A673 (cell line): ENCODE measurements at regions of chr17 and their contacts with region 1.

Region 1: GRCh38 chr17:79997011-79997660 is 38.5 kb downstream of the TBC1D16 start:
- DNase-seq: peak; percentile 88
- H3K4me3 ChIP-seq: no peak overlapping the region
- H3K27ac ChIP-seq: peak overlapping the region; percentile 80
- H3K4me1 ChIP-seq: peaks cover 38% of the 10 kb centered on the region
- H3K27me3 ChIP-seq: no peaks in the 10 kb centered on the region
- CTCF ChIP-seq: no peak

Region 2: DNA sequence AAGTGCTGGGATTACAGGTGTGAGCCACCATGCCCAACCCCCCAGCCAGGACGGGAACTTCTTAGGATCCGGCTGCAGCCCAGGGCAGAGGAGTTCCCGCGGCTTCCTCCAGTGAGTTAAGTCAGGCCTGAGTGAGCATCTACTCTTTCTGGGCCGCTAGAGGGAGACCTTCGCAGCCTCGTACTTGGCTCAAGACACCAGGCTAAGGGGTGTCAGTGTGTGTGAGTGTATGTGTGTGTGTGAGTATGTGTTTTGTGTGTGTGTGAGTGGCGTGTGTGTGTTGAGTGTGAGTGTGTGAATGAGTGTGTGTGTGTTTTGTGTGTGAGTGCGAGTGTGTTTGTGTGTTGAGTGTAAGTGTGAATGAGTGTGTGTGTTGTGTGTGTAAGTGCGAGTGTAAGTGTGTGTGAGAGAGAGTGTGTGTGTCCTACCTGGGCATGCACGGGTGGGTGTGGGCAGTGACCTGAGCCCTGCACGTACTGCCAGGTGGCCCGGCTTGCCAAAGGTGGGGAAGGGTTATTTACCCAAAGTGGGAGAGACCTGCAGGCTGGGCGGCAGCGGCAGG is 1707.3 kb before region 1 on chr17:
- CTCF ChIA-PET with region 1: interaction called, 12 read pairs
- POLR2A ChIA-PET with region 1: no interaction called
- intact Hi-C with region 1: no loop called
- DNase-seq: peak; percentile 90
- H3K4me3 ChIP-seq: no peak overlapping the region
- H3K27ac ChIP-seq: no peak overlapping the region
- H3K4me1 ChIP-seq: no peaks in the 10 kb centered on the region
- H3K27me3 ChIP-seq: no peaks in the 10 kb centered on the region
- CTCF ChIP-seq: peak; percentile 89

Region 3: DNA sequence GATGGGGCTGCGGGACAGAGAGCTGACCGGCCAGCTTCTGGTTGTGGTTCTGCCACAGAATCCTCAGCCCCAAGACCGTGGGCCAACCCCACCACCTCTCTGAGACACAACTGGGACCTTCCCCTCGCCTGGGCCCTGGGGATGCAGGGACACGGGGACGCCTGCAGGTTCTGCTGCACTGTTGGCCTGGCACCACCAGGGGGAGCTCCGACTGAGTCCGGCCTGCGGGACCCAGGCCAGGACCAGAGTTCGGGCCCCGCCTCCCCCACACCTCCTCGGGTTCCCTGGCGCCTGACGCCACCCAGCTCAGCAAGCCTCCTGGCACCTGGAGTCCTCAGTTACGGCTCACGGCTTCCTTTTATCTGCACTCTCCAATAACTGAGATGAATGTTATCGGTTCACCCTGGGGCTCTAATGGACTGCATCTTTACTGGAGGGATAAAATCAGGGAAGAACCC is 11.3 kb after region 1 on chr17:
- CTCF ChIA-PET with region 1: interaction called, 11 read pairs
- POLR2A ChIA-PET with region 1: no interaction called
- intact Hi-C with region 1: no loop called
- DNase-seq: peak; percentile 74
- H3K4me3 ChIP-seq: no peak overlapping the region
- H3K27ac ChIP-seq: no peak overlapping the region
- H3K4me1 ChIP-seq: no peaks in the 10 kb centered on the region
- H3K27me3 ChIP-seq: no peaks in the 10 kb centered on the region
- CTCF ChIP-seq: peak; percentile 98

Region 4: DNA sequence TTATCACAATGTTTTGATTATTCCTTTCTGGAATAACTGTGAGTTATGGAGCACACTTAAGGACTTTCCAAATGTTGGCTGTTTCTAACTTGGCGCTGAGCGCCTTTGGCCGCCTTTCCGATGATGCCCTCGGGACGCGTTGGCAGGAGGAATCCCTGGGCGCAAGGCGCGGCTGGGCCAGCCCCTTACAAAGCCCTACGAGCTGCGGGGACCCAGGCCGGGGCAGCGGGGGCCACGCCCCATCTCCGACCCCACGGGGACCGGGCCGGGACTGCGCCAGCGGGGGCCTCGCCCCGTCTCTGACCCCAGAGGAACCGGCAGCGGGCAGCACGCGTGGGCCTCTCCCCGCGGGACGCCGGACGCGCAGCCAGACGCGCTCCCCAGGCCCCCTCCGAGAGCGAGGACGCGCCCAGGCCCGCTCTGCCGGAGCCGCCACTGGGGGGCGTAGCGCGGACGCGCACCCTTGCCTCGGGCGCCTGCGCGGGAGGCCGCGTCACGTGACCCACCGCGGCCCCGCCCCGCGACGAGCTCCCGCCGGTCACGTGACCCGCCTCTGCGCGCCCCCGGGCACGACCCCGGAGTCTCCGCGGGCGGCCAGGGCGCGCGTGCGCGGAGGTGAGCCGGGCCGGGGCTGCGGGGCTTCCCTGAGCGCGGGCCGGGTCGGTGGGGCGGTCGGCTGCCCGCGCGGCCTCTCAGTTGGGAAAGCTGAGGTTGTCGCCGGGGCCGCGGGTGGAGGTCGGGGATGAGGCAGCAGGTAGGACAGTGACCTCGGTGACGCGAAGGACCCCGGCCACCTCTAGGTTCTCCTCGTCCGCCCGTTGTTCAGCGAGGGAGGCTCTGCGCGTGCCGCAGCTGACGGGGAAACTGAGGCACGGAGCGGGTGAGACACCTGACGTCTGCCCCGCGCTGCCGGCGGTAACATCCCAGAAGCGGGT is 104.1 kb after region 1 on chr17 and contains the start of gene GAA:
- CTCF ChIA-PET with region 1: no interaction called
- POLR2A ChIA-PET with region 1: no interaction called
- intact Hi-C with region 1: no loop called
- DNase-seq: peak; percentile 91
- H3K4me3 ChIP-seq: peak within 1 kb of the TSS; percentile 84
- H3K27ac ChIP-seq: peak within 1 kb of the TSS; percentile 80
- H3K4me1 ChIP-seq: peaks cover 8% of the 10 kb centered on the region
- H3K27me3 ChIP-seq: no peaks in the 10 kb centered on the region
- CTCF ChIP-seq: peak; percentile 61
- total RNA-seq, gene GAA: 7.5 and 12.7 TPM in 2 replicates

Region 5: DNA sequence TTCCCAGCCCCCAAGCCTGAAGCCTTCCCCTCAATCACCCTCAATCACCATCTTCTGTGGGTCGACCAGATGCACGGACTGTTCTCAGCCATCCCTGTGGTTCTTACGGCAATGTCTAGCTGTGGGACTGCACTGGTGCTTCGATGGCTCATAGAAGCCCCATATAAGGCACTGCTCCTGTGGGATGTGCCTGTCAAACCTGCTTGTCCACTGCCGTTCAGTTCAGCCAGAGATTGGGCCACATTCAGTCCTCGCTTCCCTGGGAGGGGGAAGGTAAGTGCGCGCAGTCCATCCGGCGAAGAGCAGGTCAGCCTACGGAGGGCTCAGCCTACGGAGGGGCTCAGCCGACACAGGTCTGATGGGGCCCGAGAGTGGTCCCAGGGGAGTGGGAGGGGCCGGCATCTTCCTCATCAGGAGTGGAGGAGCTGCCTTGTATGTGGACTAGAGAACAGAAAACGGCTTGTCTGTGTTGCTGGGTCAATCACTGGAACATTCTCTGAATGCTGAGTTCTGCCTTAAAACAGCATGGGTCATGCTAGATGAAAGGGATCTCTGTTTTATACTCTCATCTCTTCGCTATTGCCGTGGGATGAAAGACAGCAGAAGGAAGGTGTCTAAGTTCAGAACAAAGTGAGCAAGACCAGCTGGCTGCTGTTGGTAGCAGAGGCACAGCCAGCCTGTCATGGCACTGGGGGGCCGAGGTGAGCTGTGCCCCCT is 172.8 kb after region 1 on chr17 and contains the start of gene CARD14:
- CTCF ChIA-PET with region 1: no interaction called
- POLR2A ChIA-PET with region 1: no interaction called
- intact Hi-C with region 1: no loop called
- DNase-seq: no peak
- H3K4me3 ChIP-seq: no peak within 1 kb of the TSS
- H3K27ac ChIP-seq: no peak within 1 kb of the TSS
- H3K4me1 ChIP-seq: no peaks in the 10 kb centered on the region
- H3K27me3 ChIP-seq: no peaks in the 10 kb centered on the region
- CTCF ChIP-seq: no peak
- total RNA-seq, gene CARD14: 0.09 TPM in 1 of 2 replicates, not detected in the other

Region 6: DNA sequence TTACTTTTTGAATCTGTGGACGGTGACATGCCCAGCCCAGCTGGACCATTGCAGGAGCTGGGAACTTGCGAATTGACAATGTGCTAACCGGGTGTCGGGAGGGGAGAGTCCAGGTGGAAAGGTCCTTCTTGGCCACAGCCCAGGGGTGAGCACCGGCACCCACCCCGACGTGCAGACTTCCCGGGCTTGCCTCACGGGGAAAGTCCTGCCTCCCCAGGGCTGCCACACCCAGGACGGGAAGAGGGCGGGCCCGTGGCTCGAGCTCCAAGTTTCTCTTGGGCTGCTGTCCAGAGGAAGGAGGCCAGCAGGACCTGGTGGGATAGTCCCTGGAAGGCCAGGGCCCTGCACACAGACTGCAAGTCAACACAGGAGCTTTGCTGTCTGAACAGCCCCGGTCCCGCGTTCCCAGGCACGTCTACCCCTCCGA is 190.4 kb after region 1 on chr17:
- CTCF ChIA-PET with region 1: no interaction called
- POLR2A ChIA-PET with region 1: no interaction called
- intact Hi-C with region 1: no loop called
- DNase-seq: no peak
- H3K4me3 ChIP-seq: no peak overlapping the region
- H3K27ac ChIP-seq: no peak overlapping the region
- H3K4me1 ChIP-seq: no peaks in the 10 kb centered on the region
- H3K27me3 ChIP-seq: no peaks in the 10 kb centered on the region
- CTCF ChIP-seq: no peak